H1 (cell line): ENCODE measurements at regions of chr16 and their contacts with region 1.

Region 1: GRCh38 chr16:75224306-75225091 is 5.7 kb downstream of the CTRB1 start:
- DNase-seq: no peak
- H3K4me3 ChIP-seq: no peak overlapping the region
- H3K27ac ChIP-seq: no peak overlapping the region
- H3K4me1 ChIP-seq: peaks cover 0 to 4% (median 0%) of the 10 kb centered on the region in 4 experiments; a peak in 1 of 7 replicates
- H3K27me3 ChIP-seq: no peaks in the 10 kb centered on the region
- CTCF ChIP-seq: no peak
- EP300 ChIP-seq: no peak
- POLR2A ChIP-seq: no peak
- RAD21 ChIP-seq: no peak

Region 2: DNA sequence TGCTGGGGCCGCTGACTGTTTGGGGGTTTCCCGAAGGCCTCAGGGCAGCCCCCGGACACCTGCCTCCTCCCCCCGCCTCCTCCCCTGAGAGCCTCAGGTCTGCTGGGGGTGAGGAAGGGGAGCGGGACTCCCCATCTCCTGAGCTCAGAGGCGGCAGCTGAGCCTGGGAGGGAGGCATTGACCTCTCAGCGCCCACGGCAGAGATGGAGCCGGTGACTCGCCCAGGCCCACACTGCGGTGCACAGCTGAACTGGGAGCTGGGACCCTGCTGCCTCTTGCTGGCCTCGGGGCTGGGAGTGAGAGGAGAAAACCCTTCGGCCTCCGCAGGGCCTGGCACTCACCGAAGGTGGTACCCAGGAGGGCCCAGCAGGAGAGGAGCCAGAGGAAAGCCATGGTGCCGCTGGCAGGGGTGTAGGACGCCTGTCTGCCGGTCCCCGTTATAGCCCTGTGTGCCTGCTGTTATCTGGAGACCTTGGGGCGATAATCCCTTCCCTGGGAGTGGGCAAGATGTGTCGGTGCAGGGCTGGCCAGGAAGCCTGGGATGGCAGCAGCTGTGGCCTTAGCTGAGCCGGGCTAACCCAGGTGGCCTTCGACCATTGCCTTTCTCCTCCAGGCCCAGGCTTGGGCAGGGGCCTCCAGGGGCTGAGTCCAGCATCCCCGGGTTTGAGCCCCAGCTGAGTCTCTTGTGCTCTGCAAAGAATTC is 17.6 kb before region 1 on chr16 and contains the start of gene CTRB2:
- CTCF ChIA-PET with region 1: interaction called, 157 read pairs
- POLR2A ChIA-PET with region 1: interaction called, 115 read pairs
- DNase-seq: no peak
- H3K4me3 ChIP-seq: no peak within 1 kb of the TSS
- H3K27ac ChIP-seq: no peak within 1 kb of the TSS
- H3K4me1 ChIP-seq: no peaks in the 10 kb centered on the region; a peak in 1 of 7 replicates
- H3K27me3 ChIP-seq: no peaks in the 10 kb centered on the region
- CTCF ChIP-seq: no peak
- EP300 ChIP-seq: no peak
- POLR2A ChIP-seq: no peak
- RAD21 ChIP-seq: no peak
- total RNA-seq, gene CTRB2: not detected in 2 replicates